Activated T-helper 2 cell treated with anti-CD3 and anti-CD28 coated beads, Interferon-gamma antibody, Interleukin-2, Interleukin-4, amounts not matched to agents 10 μg/mL and 5 μg/mL and 100 μg/mL, durations not matched to agents 14 hours and 24 hours and 36 hours (primary cell): ENCODE measurements at regions of chr5 and their contacts with region 1.

Region 1: DNA sequence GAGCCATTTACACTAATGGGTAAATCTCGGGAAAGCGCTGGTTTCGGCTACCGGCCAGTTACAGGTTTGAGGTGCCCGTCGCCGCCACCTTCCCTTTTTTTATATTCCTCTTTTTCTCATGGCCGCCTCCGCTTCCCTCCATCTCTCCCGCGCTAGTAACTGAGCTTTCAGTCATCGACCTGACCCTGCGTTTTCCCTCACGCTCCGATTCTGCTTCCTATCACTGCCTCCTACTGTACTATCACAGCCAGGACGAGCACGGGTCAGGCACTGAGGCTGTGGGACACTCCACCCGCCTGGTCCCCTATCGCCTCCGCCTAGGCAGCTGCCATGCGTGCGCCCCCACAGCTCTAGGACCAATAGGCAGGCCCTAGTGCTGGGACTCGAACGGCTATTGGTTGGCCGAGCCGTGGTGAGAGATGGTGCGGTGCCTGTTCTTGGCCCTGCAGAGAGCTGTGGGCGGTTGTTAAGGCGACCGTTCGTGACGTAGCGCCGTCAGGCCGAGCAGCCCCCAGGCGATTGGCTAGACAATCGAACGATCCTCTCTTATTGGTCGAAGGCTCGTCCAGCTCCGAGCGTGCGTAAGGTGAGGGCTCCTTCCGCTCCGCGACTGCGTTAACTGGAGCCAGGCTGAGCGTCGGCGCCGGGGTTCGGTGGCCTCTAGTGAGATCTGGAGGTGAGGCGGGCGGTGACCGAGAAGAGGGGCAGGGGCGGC is at the start of gene HMGCR:
- DNase-seq: peak; percentile 97
- H3K4me3 Mint-ChIP-seq: no peak within 1 kb of the TSS
- H3K27ac Mint-ChIP-seq: no peak within 1 kb of the TSS
- H3K4me1 Mint-ChIP-seq: peaks cover 33% of the 10 kb centered on the region
- H3K27me3 Mint-ChIP-seq: no peaks in the 10 kb centered on the region
- total RNA-seq, gene HMGCR: 122 and 123 TPM in 2 replicates

Region 2: GRCh38 chr5:74934949-74935751 is 401.6 kb before region 1 on chr5:
- intact Hi-C with region 1: loop called (anchors 5 kb)
- DNase-seq: peak; percentile 11
- H3K4me3 Mint-ChIP-seq: peak overlapping the region; percentile 33
- H3K27ac Mint-ChIP-seq: peak overlapping the region; percentile 48
- H3K4me1 Mint-ChIP-seq: peaks cover 31% of the 10 kb centered on the region
- H3K27me3 Mint-ChIP-seq: peaks cover 25% of the 10 kb centered on the region

Region 3: DNA sequence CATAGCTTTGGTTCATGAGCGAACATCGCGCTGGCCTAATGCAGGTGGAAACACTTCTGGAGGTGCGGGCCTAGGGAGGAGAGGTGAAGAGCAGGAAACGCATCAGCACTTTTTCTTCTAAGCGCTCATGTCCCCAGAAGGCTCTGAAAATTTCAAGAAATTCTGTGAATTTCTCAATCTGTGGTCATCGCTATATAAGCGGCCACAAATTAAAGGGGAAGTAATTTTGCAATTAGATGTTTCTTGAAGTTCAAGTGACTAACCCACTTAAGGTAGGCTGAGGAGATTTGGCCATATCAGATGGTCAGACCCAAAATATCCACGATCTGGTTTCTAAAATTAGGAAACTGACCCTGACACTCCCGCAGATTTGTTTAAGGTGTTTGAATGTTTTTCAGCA is 16.4 kb before region 1 on chr5:
- intact Hi-C with region 1: loop called (anchors 1 kb)
- DNase-seq: no peak
- H3K4me3 Mint-ChIP-seq: no peak overlapping the region
- H3K27ac Mint-ChIP-seq: peak overlapping the region; percentile 77
- H3K4me1 Mint-ChIP-seq: peaks cover 24% of the 10 kb centered on the region
- H3K27me3 Mint-ChIP-seq: no peaks in the 10 kb centered on the region

Region 4: DNA sequence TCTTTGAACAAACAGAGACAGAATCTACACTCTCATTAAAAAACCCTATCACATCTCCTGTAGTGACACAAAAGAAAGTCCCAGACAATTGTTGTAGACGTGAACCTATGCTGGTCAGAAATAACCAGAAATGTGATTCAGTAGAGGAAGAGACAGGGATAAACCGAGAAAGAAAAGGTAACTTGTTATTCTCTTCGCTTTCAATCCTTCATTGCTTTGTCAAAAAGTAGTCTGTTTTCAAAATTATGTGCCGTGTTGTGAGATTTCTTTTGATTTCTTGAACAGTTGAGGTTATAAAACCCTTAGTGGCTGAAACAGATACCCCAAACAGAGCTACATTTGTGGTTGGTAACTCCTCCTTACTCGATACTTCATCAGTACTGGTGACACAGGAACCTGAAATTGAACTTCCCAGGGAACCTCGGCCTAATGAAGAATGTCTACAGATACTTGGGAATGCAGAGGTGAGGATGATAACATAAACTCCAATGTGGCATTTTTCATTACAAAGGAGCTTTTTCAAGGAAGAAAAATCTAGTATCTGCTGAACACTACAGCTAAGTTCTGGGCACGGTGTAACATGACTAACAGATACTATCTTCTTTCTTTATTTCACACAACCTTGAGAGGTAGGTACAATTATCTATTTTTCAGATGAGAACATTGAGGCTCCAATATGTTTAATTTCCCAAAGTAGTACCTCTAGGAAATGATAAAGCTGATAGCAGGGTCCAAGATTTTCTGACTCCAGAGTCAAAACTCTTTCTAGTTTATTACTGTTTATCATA is 14.6 kb after region 1 on chr5:
- intact Hi-C with region 1: loop called (anchors 1 kb)
- DNase-seq: no peak
- H3K4me3 Mint-ChIP-seq: peak overlapping the region; percentile 30
- H3K27ac Mint-ChIP-seq: peak overlapping the region; percentile 80
- H3K4me1 Mint-ChIP-seq: peaks cover 42% of the 10 kb centered on the region
- H3K27me3 Mint-ChIP-seq: no peaks in the 10 kb centered on the region

Region 5: DNA sequence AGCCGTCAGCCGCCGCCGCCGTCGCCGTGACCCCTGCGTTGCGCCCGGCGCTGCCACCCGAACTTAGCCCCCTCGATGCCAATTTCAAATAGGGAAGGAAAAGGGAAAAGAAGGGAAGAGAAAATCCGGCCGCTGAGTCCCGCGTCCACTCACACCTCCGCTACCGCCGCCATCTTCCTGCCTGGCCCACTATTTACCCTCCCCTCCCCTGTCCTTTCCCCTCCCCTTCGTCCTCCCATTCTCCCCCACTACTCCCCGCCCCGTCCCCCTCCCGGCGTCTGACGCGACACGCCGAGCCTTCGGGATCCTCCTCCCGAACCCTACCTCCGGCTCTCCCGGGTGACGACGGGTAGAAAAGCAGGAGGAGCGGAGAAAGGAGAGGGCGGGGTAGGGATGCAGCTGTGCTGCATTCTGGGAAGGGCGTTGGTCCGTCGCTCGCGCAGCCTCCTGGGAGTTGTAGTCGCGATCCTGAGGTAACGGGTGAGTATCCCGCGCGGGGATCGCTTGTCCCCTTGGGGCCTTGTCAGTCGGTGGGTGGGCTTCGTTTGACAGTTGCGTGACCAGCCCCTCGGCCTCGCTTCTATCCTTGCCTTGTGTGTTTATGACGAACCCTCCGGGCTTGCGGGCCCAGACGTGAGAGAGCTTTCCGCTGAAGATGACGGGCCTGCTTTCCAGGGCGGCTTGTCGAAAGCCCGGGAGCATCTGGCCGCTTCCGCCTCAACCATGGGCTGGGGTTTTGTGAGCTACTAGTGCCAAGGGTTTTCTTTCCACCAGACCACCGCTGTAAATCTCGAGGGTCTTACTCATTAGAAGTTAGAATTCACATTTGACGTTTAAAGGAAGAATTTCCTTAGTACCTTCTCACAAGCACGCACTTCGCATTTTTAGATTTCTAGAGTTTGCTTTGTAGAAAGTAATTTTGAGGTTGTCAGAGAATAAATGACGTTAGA is 174.9 kb after region 1 on chr5 and contains the starts of genes CERT1 and POLK:
- intact Hi-C with region 1: loop called (anchors 1 kb)
- DNase-seq: peak; percentile 95
- H3K4me3 Mint-ChIP-seq: peak within 1 kb of the TSS; percentile 100
- H3K27ac Mint-ChIP-seq: peak within 1 kb of the TSS; percentile 90
- H3K4me1 Mint-ChIP-seq: peaks cover 51% of the 10 kb centered on the region
- H3K27me3 Mint-ChIP-seq: no peaks in the 10 kb centered on the region
- total RNA-seq, gene CERT1: 38.6 and 43.7 TPM in 2 replicates
- total RNA-seq, gene POLK: 41.4 and 42.6 TPM in 2 replicates

Region 6: DNA sequence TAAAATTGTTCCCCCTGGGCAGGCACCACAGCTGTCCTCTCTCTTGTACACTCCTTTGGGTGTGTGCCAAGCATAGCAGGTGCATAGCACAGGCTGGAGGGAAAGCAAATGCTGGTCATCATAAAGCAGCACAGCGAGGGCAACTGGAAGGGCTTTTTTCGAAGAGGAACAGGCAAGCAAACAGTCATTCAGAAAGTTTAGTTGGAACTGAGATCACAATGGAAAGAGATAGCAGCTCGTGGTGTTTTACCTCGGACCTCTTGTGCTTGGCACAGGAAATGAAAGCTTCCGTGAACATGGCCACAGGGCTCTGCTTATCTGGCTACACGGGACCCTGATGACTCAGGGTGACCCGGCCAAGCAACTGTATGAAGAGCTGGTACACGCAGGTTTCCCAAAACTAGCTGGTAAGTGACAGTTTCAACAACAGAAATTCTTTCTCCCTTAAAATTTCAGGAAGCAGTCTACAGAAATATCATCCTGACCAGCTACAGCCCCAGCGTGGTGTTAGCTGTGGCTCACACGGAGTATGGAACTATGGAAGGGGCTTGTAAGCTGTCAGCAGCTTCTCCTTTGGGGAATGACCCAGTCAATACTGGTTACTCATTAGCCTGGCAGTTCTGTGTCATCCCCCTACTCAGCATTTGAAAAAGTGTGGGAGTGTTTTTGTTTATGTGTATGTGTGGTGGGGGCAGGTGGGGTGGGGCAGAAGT is 332.4 kb after region 1 on chr5:
- intact Hi-C with region 1: loop called (anchors 2 kb)
- DNase-seq: peak; percentile 57
- H3K4me3 Mint-ChIP-seq: peak overlapping the region; percentile 65
- H3K27ac Mint-ChIP-seq: peak overlapping the region; percentile 92
- H3K4me1 Mint-ChIP-seq: peaks cover 54% of the 10 kb centered on the region
- H3K27me3 Mint-ChIP-seq: no peaks in the 10 kb centered on the region

Region 7: GRCh38 chr5:75717082-75717922 is 380.5 kb after region 1 on chr5 and contains the start of gene POC5:
- intact Hi-C with region 1: loop called (anchors 2 kb)
- DNase-seq: peak; percentile 97
- H3K4me3 Mint-ChIP-seq: peak within 1 kb of the TSS; percentile 100
- H3K27ac Mint-ChIP-seq: peak within 1 kb of the TSS; percentile 100
- H3K4me1 Mint-ChIP-seq: peaks cover 29% of the 10 kb centered on the region
- H3K27me3 Mint-ChIP-seq: peaks cover 10% of the 10 kb centered on the region
- total RNA-seq, gene POC5: 16.2 and 16.5 TPM in 2 replicates